PC-9 (cell line): ENCODE measurements at regions of chr7 and their contacts with region 1.

Region 1: GRCh38 chr7:150404805-150405583 is 25.9 kb downstream of the ZNF775 start:
- DNase-seq: peak; percentile 64 to 83
- H3K4me3 ChIP-seq: peak overlapping the region; percentile 67
- H3K27ac ChIP-seq: no peak overlapping the region
- H3K4me1 ChIP-seq: peaks cover 32% of the 10 kb centered on the region
- H3K27me3 ChIP-seq: no peaks in the 10 kb centered on the region
- CTCF ChIP-seq: peak; percentile 37; the same call in 1 of the 2 replicates

Region 2: GRCh38 chr7:149529136-149529718 is 875.8 kb before region 1 on chr7:
- CTCF ChIA-PET with region 1: no interaction called
- POLR2A ChIA-PET with region 1: no interaction called
- intact Hi-C with region 1: no loop called
- DNase-seq: no peak
- H3K4me3 ChIP-seq: no peak overlapping the region
- H3K27ac ChIP-seq: no peak overlapping the region
- H3K4me1 ChIP-seq: no peaks in the 10 kb centered on the region
- H3K27me3 ChIP-seq: no peaks in the 10 kb centered on the region
- CTCF ChIP-seq: no peak

Region 3: DNA sequence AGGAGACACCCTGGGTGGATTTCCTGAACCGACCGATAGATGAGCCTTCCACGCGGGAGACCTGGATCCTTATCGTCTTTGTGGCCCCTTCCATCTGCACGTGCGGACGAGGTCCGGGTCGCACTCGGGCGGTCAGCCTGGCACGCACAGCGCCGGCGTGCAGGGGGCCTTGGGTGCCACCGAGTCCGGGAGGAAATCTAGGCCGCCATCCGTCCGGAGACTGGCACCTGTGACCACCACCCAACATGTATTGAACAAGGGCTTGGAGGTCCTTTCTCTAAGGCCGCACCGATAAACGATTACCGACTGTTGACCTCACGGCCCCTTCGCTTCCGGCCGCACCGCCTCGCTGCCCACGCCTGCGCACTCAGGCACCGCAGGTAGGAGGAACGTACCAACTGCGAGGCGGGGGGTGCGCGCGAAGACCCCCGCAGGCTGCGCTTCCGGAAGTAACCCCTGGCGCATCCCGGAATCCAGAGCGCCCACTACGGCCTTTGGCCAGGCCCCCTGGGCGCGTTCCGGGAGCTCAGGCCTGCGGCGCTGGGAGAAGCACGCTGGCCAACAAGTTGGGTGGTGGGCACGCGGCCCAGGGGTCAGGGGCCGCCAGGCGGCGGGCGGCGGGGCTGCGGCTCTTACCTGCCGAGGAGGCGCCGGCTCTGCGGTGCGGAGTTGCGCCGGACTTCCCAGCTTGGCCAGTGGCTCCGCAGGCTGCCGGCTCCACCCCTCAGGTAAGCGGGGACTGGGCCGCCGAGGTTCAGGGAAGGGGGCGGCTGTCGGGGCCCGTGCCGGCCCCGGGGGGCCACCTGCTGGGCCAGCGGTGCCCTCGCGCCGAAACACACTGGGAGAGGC is 81.9 kb before region 1 on chr7 and contains the starts of genes ACTR3C and LRRC61:
- CTCF ChIA-PET with region 1: no interaction called
- POLR2A ChIA-PET with region 1: no interaction called
- intact Hi-C with region 1: loop called (anchors 5 kb)
- DNase-seq: peak; percentile 69 to 73
- H3K4me3 ChIP-seq: peak within 1 kb of the TSS; percentile 98
- H3K27ac ChIP-seq: peak within 1 kb of the TSS; percentile 83
- H3K4me1 ChIP-seq: peaks cover 54% of the 10 kb centered on the region
- H3K27me3 ChIP-seq: no peaks in the 10 kb centered on the region
- CTCF ChIP-seq: peak; percentile 42; the same call in 1 of the 2 replicates
- total RNA-seq, gene ACTR3C: 24.1 and 34.5 TPM in 2 replicates
- total RNA-seq, gene LRRC61: 34.8 and 42.3 TPM in 2 replicates

Region 4: GRCh38 chr7:150368096-150368883 is 36.7 kb before region 1 on chr7 and contains the start of gene REPIN1:
- CTCF ChIA-PET with region 1: interaction called, 6 read pairs
- POLR2A ChIA-PET with region 1: interaction called, 4 read pairs
- intact Hi-C with region 1: loop called (anchors 2 kb)
- DNase-seq: peak; percentile 90 to 93
- H3K4me3 ChIP-seq: peak within 1 kb of the TSS; percentile 94
- H3K27ac ChIP-seq: peak within 1 kb of the TSS; percentile 97
- H3K4me1 ChIP-seq: peaks cover 37% of the 10 kb centered on the region
- H3K27me3 ChIP-seq: no peaks in the 10 kb centered on the region
- CTCF ChIP-seq: no peak
- total RNA-seq, gene REPIN1: 172 and 174 TPM in 2 replicates

Region 5: GRCh38 chr7:150378853-150379440 is 26.0 kb before region 1 on chr7 and contains the start of gene ZNF775:
- CTCF ChIA-PET with region 1: no interaction called
- POLR2A ChIA-PET with region 1: interaction called, 7 read pairs
- intact Hi-C with region 1: loop called (anchors 1 kb)
- DNase-seq: peak; percentile 89 to 99
- H3K4me3 ChIP-seq: peak within 1 kb of the TSS; percentile 89
- H3K27ac ChIP-seq: peak within 1 kb of the TSS; percentile 31
- H3K4me1 ChIP-seq: peaks cover 20% of the 10 kb centered on the region
- H3K27me3 ChIP-seq: no peaks in the 10 kb centered on the region
- CTCF ChIP-seq: no peak
- total RNA-seq, gene ZNF775: 3.1 and 3.4 TPM in 2 replicates

Region 6: GRCh38 chr7:150695654-150696053 is 290.7 kb after region 1 on chr7:
- CTCF ChIA-PET with region 1: interaction called, 10 read pairs
- POLR2A ChIA-PET with region 1: no interaction called
- intact Hi-C with region 1: no loop called
- DNase-seq: no peak
- H3K4me3 ChIP-seq: no peak overlapping the region
- H3K27ac ChIP-seq: no peak overlapping the region
- H3K4me1 ChIP-seq: no peaks in the 10 kb centered on the region
- H3K27me3 ChIP-seq: peaks cover 26% of the 10 kb centered on the region
- CTCF ChIP-seq: no peak